ENCODE measurements at regions of chr5 and their contacts with region 1.

Region 1: GRCh38 chr5:170225326-170226128 is 7.3 kb upstream of the C5orf58 start:
- DNase-seq: peak; percentile 91
- ATAC-seq: peak; percentile 80
- H3K4me3 Mint-ChIP-seq: no peak overlapping the region
- H3K27ac Mint-ChIP-seq: no peak overlapping the region
- H3K4me1 Mint-ChIP-seq: peaks cover 5% of the 10 kb centered on the region
- H3K27me3 Mint-ChIP-seq: no peaks in the 10 kb centered on the region
- CTCF ChIP-seq: peak; percentile 74

Region 2: DNA sequence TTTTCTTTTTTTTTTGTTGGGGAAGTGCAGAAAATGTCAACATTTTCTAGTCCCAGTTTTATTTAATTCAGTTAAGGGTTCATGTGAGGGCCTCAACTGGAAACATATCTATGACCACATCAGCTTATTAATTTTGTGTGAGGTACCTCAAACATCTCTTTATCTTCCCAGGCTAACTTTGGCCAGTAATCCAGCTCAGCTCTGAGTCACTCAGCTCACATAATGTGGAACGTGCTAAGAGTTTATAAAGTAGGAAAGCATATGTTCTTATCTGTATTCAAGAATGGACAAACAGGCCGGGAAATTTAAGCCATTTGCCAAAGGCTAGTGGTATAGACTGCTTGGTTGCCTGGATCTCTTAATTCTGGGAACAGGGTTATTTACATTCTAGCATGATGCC is 363.6 kb before region 1 on chr5:
- CTCF ChIA-PET with region 1: no interaction called
- POLR2A ChIA-PET with region 1: no interaction called
- intact Hi-C with region 1: no loop called
- DNase-seq: no peak
- ATAC-seq: no peak
- H3K4me3 Mint-ChIP-seq: no peak overlapping the region
- H3K27ac Mint-ChIP-seq: no peak overlapping the region
- H3K4me1 Mint-ChIP-seq: peaks cover 18% of the 10 kb centered on the region
- H3K27me3 Mint-ChIP-seq: no peaks in the 10 kb centered on the region
- CTCF ChIP-seq: no peak

Region 3: GRCh38 chr5:170235876-170236864 is 10.6 kb after region 1 on chr5:
- CTCF ChIA-PET with region 1: interaction called, 55 read pairs
- POLR2A ChIA-PET with region 1: interaction called, 3 read pairs
- intact Hi-C with region 1: no loop called
- DNase-seq: no peak
- ATAC-seq: no peak
- H3K4me3 Mint-ChIP-seq: no peak overlapping the region
- H3K27ac Mint-ChIP-seq: no peak overlapping the region
- H3K4me1 Mint-ChIP-seq: peaks cover 9% of the 10 kb centered on the region
- H3K27me3 Mint-ChIP-seq: no peaks in the 10 kb centered on the region
- CTCF ChIP-seq: no peak

Region 4: DNA sequence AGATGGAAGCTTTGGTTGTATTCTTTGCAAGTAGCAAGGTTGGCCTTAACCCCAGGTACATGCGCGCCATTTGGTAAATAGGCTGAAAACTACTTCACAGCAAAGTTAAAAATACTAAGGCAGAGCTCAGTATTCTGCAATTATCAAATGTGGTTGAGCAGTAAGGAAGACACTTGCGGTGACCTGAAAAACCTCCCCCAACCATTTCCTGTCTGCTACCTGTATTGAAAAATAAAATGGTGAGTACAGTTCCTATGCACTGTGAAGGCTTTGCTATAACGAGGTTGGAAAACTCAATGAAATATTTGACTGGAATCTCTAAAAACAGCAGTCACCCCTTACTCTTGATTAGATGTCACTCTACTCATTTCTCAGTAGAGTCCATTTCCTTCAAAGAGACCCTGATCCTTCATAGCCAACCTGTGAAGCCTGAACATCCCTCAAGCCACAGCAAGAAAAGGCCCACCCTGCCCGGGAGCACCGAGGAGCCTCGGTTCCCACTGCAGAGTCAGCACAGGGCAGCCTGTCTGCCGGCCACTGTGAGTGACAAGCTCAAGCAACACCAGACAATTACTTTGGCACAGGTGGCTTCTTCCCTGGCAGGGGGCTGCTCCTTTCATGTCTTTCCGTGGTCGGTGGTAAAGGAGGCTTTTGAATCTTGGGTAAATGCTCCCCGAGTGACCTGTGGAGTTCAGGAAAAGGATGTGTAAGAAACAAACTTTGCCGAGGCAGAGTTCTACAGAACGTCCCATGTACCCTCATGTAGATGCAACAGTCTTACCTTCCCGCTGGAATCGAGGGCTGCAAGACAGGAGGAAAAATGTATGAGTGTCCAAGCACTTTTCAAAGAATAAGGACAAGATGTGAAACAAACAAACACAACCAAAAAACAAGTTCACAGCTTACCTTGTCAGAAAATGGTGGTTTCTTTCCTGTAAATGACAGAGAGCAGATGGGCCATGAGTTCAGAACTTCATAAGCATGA is 36.8 kb after region 1 on chr5:
- CTCF ChIA-PET with region 1: interaction called, 46 read pairs
- POLR2A ChIA-PET with region 1: interaction called, 3 read pairs
- intact Hi-C with region 1: no loop called
- DNase-seq: peak; percentile 60
- ATAC-seq: peak; percentile 25
- H3K4me3 Mint-ChIP-seq: peak overlapping the region; percentile 47
- H3K27ac Mint-ChIP-seq: peak overlapping the region; percentile 96
- H3K4me1 Mint-ChIP-seq: peaks cover 91% of the 10 kb centered on the region
- H3K27me3 Mint-ChIP-seq: no peaks in the 10 kb centered on the region
- CTCF ChIP-seq: no peak

Region 5: DNA sequence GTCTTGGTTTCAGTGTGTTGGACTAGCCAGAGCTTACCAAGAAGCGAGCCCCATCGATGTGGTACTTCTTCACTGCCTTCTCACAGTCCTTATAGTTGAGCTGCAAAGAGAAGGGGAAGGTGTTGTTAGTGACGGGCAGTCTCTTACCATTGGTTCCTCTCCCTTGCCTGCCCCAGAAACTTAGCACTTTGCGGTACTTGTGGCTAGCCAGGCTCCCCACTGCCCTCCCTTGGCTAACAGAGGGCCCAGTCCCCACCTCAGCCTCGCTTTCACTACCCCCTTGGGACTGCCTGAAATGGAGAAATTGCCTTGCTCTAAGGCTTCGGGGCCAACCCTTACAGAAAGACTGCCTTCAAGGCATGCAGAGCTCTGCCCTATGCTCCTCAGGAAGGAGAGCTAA is 67.7 kb after region 1 on chr5:
- CTCF ChIA-PET with region 1: interaction called, 14 read pairs
- POLR2A ChIA-PET with region 1: interaction called, 3 read pairs
- intact Hi-C with region 1: no loop called
- DNase-seq: peak; percentile 89
- ATAC-seq: peak; percentile 43
- H3K4me3 Mint-ChIP-seq: peak overlapping the region; percentile 97
- H3K27ac Mint-ChIP-seq: peak overlapping the region; percentile 96
- H3K4me1 Mint-ChIP-seq: peaks cover 61% of the 10 kb centered on the region
- H3K27me3 Mint-ChIP-seq: no peaks in the 10 kb centered on the region
- CTCF ChIP-seq: no peak

Region 6: DNA sequence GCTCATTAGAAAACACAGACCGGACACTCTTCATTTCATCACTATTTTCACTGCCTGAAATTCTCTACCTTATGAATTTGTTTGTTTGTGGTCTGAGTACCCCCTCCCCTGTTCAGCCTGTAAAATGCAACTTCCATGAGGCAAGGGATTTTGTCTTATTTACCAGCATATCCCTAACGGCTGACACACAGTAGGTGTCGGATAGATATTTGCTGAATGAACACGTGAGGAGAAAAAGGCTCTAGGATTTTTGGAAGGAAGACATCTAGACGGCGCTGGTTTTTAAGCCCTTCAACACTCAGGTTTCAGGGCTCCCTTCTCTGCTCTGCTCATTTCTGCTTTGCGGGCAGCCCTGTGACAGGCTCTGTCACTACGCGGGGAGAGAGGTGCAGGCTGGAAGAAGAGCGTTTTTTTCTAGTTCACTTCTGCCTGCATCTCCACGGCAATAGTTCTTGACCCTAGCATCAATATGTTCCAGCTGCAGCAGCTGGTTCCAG is 122.7 kb after region 1 on chr5:
- CTCF ChIA-PET with region 1: interaction called, 228 read pairs
- POLR2A ChIA-PET with region 1: no interaction called
- intact Hi-C with region 1: no loop called
- DNase-seq: no peak
- ATAC-seq: no peak
- H3K4me3 Mint-ChIP-seq: no peak overlapping the region
- H3K27ac Mint-ChIP-seq: no peak overlapping the region
- H3K4me1 Mint-ChIP-seq: no peaks in the 10 kb centered on the region
- H3K27me3 Mint-ChIP-seq: peaks cover 15% of the 10 kb centered on the region
- CTCF ChIP-seq: peak; percentile 23